ENCODE measurements at regions of chr3 and their contacts with region 1.

Region 1: DNA sequence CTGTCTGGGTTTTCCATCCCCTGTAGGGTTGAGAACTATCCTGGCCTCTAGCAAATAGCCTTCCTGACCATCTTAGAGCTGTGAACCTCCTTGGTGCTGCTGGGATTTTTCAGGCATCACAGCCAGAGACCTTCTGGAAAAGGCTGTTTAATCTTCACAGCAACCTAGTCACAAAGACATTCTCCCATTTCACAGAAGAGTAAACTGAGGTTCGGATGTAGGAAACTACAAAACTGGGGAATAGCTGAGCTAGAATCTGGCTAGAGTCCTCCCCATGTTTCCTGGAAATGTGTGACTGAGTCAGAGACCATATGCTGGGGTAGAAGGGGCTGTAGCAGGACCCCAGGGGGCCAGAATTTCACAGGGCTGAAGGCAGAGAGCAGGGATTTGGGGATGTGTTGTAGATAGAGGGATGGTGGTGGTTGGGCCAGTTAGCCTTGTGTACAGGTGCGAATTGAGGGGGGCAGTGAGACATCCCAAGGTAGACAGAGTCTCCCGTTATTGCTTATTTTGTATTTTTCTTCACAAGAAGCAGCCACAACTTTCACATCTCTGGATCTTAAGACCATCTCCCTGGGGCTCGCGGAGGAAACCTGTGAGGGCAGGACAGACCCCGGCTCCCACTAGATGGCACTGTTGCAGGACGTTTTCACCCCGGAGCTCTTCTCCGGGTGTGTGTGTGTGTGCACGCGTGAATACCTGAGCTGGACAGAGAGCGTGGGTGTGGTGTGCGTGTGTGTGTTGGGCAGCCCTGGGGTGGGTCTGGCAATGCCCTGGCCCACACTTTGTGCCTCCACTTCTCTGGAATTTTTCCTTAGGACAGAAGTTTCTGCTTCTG is 66.9 kb upstream of the PRR23C start:
- DNase-seq: no peak
- H3K4me3 ChIP-seq: no peak overlapping the region
- CTCF ChIP-seq: peak; percentile 87

Region 2: DNA sequence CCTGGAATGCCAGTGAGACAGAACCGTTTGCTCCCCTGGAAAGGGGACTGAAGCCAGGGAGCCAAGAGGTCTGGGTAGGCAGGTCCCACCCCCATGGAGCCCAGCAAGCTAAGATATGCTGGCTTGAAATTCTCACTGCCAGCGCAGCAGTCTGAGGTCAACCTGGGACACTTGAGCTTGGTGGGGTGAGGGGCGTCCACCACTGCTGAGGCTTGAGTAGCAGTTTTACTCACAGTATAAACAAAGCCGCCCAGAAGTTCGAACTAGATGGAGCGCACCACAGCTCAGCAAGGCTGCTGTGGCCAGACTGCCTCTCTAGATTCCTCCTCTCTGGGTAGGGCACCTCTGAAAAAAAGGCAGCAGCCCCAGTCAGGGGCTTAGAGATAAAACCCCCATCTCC is 551.1 kb before region 1 on chr3:
- CTCF ChIA-PET with region 1: no interaction called
- POLR2A ChIA-PET with region 1: no interaction called
- DNase-seq: no peak
- H3K4me3 ChIP-seq: no peak overlapping the region
- CTCF ChIP-seq: no peak

Region 3: GRCh38 chr3:138740072-138740471 is 371.5 kb before region 1 on chr3:
- CTCF ChIA-PET with region 1: no interaction called
- POLR2A ChIA-PET with region 1: no interaction called
- DNase-seq: no peak
- H3K4me3 ChIP-seq: no peak overlapping the region
- CTCF ChIP-seq: no peak

Region 4: GRCh38 chr3:139087621-139088020 is 24.0 kb before region 1 on chr3:
- CTCF ChIA-PET with region 1: no interaction called
- POLR2A ChIA-PET with region 1: no interaction called
- DNase-seq: no peak
- H3K4me3 ChIP-seq: no peak overlapping the region
- CTCF ChIP-seq: no peak

Region 5: DNA sequence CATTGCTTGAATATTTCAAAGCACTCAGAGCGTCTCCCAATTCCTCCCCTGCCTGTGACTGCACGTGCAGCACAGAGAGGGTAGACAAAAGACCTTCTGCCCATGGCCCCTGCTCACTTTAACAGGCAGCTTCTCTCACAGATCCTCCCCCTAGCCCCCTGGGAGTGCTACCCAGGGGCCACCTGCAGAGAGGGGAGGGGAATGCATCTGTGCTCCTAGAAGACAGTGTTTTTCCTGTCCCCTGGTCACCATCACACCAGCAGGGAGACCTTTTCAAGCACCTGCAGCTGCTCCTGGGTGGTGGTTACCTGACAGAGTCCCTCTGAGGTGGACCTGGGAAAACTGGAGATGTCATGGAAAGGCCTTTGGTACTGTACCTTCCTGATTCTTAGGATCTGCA is 10.2 kb before region 1 on chr3:
- CTCF ChIA-PET with region 1: interaction called, 46 read pairs
- POLR2A ChIA-PET with region 1: no interaction called
- DNase-seq: no peak
- H3K4me3 ChIP-seq: no peak overlapping the region
- CTCF ChIP-seq: no peak

Region 6: DNA sequence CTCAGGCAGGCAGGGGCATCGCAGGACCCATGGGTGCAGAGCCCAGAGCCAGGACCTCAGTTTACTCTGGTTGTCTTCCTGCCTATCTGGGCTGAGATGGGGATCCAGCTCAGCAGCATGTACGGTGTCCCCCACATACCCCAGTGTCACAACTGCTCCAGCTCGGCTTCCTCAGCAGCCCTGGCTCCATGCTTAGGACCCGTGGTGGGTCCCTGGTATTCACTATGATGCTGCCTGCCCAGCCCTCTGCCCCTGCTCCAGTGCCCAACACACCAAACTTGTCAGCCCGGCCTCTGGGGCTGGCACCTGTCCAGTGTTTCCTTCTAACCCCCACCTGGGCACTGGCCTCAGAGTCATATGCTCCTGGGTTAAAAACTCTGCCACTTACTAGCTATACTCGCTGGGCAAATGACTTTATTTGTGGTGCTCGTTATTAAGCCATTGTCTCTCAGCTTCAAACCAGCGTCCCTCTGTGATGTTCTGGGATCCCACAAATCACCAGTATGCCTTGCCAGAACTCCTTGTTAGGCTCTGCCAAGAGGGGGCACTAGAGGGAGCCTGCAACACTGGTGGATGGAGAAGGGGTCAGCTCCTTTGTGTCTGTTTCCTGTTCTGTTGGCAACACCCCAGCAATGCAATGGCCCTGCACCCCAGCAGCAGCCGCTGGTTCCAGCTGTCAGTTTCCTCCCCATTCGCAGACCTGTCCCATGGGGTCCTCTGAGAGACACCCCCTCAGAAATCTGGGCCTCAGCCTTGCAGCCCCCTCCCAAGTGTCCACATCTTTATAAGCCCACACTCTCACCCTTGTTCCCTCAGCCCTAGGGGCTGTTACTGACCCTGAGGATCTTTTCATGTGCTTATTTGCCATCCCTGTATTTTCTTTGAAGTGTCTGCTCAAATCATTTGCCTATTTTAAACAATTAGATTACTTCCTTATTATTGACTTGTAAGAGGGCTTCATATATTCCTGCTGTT is 208.1 kb after region 1 on chr3:
- CTCF ChIA-PET with region 1: interaction called, 127 read pairs
- POLR2A ChIA-PET with region 1: no interaction called
- DNase-seq: no peak
- H3K4me3 ChIP-seq: no peak overlapping the region
- CTCF ChIP-seq: peak; percentile 27

Region 7: DNA sequence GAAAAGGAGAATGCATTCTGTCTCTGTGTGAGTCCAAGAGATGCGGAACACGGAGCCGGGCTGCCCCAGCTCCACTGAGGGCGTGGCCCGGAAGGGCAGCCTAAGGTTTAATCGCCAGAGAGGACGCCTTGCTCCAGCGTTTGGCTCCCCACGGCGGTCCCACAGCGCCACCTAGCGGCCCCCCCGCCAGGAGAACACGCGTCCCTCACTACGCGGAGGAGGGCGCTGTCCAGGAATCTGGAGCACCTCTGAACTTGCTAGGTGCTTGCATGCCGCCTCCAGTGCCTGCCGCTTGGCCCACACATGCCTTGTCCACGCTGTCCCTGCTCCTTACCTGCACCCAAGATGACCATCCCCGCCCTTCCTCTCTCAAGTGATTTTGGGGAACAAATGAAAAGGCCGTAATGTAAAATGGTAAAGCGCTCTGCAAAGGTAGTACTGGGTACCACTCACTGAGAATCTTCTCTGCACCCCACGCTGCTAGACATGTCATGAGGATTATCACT is 217.8 kb after region 1 on chr3:
- CTCF ChIA-PET with region 1: interaction called, 216 read pairs
- POLR2A ChIA-PET with region 1: interaction called, 6 read pairs
- DNase-seq: no peak
- H3K4me3 ChIP-seq: peak overlapping the region; percentile 36
- CTCF ChIP-seq: peak; percentile 100

Region 8: GRCh38 chr3:139343895-139344856 is 232.6 kb after region 1 on chr3 and contains the start of gene MRPS22:
- CTCF ChIA-PET with region 1: interaction called, 25 read pairs
- POLR2A ChIA-PET with region 1: no interaction called
- DNase-seq: peak; percentile 66
- H3K4me3 ChIP-seq: peak within 1 kb of the TSS; percentile 90
- CTCF ChIP-seq: no peak

Region 9: GRCh38 chr3:139353920-139354556 is 242.4 kb after region 1 on chr3:
- CTCF ChIA-PET with region 1: interaction called, 12 read pairs
- POLR2A ChIA-PET with region 1: no interaction called
- DNase-seq: peak; percentile 7
- H3K4me3 ChIP-seq: no peak overlapping the region
- CTCF ChIP-seq: peak; percentile 85